ENCODE measurements at regions of chr1 and their contacts with region 1.

Region 1: DNA sequence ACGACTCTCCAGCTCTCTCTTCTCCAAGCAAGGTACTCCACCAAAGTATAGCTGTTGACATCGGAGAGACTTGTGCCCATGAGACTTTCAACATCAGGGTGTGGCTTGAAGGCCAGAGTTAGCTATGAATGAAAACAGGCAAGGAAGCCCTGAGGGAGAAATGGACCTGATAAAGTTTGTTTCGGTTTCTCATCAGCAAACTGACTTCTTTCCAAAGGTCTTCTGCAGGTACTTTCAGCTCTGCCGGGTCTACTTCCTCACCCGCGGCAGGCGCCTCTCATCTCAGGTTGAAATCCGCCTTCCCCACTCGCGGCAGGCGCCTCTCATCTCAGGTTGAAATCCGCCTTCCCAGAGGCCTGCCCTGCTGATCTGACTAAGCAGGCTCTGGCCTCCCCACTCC is 2.1 kb upstream of the PER3 start:
- DNase-seq: no peak

Region 2: DNA sequence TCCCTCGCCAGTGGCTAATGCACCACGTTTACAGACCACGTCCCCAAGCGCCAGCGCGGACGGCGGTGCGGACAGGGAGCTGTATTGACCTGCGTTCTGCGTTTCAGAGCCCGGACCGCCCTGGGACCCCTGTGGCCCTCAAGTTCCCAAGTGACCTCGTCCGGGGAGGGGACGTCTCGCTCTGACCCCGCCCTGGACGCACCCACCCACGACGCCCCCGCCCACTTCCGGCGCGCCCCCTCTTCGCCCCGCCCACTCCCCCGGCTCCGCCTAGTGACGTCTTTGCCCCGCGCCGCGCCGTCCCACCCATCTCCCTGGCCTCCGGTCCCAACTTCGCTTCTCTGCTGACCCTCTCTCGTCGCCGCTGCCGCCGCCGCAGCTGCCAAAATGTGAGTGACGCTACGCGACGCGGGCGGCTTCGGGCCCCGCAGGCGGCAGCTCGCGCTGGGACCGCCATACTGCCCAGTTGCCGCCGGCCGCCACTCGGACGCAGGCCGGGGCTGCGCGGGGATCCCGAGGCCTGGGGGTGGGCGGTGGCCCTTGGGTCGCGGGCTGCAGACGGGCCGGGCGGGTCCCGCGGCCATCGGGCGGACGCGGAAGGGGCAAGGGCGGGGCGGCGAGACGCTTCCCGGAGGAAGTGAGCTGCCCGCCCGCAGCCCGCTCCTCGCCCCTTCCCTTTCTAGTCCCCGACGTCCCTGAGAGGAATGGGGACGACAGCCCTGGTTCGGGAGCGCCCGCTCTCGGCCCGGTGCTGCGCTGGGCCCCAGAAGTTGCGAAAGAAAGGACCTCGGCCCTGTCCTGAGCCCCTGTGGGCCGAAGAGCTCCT is 10.8 kb before region 1 on chr1 and contains the start of gene VAMP3:
- CTCF ChIA-PET with region 1: no interaction called
- POLR2A ChIA-PET with region 1: interaction called, 12 read pairs
- DNase-seq: peak; percentile 96

Region 3: DNA sequence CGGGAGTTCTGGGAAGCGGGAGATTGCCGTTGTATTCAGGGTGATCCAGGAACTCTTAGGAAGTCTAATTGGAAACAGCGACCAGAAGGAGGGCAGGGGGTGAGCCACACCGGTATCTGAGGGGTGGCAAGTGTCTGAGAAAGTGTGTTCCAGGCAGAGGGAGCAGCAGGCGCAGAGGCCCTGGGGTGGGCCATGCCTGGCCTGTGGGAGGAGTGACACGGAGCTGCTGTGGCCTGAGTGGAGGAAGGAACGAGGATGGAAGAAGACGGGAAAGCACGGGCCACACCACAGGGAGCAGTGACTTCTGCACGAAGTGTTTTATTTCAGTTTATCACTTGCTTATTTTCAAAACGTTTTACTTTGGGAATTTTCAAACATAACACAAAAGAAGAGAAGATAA is 13.4 kb after region 1 on chr1:
- CTCF ChIA-PET with region 1: no interaction called
- POLR2A ChIA-PET with region 1: no interaction called
- DNase-seq: no peak

Measured in HEK293T (cell line).